ENCODE measurements at regions of chr7 and their contacts with region 1.

Region 1: DNA sequence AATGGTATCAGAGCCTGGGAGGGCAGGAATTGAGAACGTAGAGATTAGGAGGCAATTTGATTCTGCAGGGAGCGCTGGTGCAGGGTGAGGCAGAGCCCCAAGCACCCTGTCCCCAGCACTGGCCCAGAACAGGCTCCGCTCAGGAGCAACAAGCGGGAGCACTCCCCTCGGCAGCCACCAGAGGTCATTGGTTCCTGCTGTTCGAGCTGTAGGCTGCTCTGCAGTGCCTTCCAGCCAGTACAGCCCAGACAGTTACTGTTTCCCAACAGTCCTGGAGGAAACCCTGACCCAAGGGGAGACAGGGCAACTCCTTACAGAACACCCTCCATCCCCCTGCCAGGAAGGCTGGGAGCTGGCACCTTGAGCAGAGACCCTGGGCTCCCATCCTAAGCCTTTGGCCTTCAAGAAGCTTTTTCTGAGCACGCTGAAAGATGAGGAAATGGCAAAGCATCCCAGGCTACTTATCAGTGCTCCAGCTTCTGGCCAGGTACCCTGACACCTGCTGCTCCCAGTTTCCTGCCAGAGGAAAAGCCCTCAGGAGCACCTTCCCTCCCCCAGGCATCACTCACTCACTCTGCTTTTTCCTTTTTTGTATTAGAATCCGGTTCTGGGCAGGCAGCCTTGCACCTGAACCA is 71.2 kb upstream of the EFCAB10 start:
- DNase-seq: peak; percentile 62
- ATAC-seq: peak; percentile 96
- H3K4me3 ChIP-seq: no peak overlapping the region
- H3K27ac ChIP-seq: no peak overlapping the region
- H3K4me1 ChIP-seq: peaks cover 46% of the 10 kb centered on the region
- H3K27me3 ChIP-seq: no peaks in the 10 kb centered on the region
- CTCF ChIP-seq: peak; percentile 94
- EP300 ChIP-seq: no peak
- POLR2A ChIP-seq: no peak
- RAD21 ChIP-seq: peak; percentile 90

Region 2: DNA sequence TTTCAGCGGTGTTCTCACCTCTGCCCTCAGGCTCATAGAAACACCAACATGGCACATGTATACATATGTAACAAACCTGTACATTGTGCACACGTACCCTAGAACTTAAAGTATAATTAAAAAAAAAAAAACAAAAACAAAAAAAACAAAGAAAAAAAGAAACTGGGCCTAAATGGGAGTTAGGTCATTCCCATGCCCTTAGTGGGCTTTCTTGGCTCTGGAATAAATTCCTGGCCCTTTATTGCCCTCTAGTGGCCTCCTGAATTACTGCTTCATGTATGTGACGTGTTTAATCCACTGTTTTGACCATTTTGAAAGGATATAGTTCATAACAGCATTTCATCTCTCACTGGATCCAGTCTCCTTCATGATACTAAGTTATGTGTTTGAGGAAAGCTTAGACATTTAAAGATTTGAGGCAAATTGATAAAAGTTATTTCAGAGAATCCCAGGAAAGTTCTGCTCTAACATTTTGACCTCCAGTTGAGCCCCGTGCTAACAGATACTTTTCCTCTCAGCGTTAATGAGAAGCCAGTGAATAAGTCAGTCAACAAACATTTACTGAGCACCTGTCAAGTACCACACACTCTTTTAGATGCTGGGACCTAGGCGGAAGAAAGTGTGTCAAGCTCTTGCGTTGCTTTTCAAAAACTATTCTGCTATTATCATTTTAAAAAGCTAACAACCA is 514.3 kb after region 1 on chr7:
- CTCF ChIA-PET with region 1: no interaction called
- POLR2A ChIA-PET with region 1: no interaction called
- in situ Hi-C with region 1: no loop called
- intact Hi-C with region 1: loop called (anchors 10 kb)
- DNase-seq: peak; percentile 62
- ATAC-seq: peak; percentile 68
- H3K4me3 ChIP-seq: no peak overlapping the region
- H3K27ac ChIP-seq: no peak overlapping the region
- H3K4me1 ChIP-seq: no peaks in the 10 kb centered on the region
- H3K27me3 ChIP-seq: peaks cover 0 to 26% of the 10 kb centered on the region in 2 experiments; a peak in 1 of 5 replicates
- CTCF ChIP-seq: peak; percentile 67
- EP300 ChIP-seq: no peak
- POLR2A ChIP-seq: no peak
- RAD21 ChIP-seq: peak; percentile 28; the same call in 1 of the 2 replicates